AG04449 (cell line): ENCODE measurements at regions of chr12 and their contacts with region 1.

Region 1: DNA sequence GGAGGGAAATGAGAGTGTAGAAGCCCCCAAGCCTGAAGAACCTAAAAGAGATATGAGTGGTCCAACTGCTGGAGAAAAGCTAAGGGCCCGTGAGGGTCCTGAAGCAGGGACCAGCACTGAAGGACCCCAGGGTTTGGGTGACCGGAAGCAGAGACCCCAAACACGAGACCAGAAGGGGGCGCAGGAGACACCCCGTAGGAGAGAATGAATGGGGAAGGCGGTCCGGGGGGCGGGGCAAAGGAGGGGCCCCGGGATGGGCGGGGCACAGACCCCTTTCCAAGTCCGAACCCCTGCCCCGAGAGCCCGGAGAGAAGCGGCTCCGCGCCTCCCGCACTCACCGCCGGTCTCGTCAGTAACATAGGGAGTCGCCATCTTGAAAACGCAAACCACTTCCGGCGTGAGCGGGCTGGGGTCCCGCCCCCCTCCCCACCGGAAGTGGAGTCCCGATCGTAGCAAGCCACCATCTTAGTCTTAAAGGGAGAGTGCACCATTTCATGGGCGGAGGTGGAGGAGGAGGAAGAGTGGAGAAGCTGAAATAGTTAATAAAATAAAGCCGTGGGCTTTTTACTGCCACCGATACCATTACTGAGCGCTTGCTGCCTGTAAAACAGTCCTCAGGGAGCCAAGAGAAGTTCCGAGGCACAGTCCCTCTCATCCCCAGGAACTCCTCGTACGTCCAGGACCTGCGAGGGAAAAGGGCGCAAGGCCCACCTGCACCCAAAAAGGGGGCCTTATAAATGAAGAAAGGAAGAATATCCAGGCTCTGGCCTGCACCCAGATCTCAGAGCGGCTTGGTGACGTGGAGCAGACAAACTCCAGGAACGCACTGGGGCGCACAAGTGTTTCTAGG is 731 bp downstream of the PYM1 start:
- DNase-seq: peak; percentile 60
- H3K4me3 ChIP-seq: peak overlapping the region; percentile 84
- CTCF ChIP-seq: peak; percentile 80

Region 2: DNA sequence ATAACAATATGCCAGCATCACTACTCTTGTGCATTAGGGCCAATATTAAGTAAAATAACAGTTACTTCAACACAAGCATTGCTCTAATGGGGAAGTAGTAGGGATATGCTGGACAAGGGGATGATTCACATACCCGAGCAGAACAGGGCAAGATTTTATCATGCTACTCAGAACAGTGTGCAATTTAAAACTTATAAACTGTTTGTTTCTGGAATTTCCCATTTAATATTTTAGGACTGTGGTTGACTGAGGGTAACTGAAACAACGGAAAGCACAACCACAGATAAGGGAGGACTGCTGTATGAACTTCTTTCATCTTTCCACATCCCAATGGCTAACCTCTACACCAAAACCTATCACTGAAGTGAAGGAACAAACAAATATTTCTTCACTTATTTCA is 146.3 kb before region 1 on chr12:
- CTCF ChIA-PET with region 1: no interaction called
- POLR2A ChIA-PET with region 1: no interaction called
- DNase-seq: peak; percentile 7
- H3K4me3 ChIP-seq: no peak overlapping the region
- CTCF ChIP-seq: no peak

Region 3: GRCh38 chr12:55817346-55818139 is 109.4 kb before region 1 on chr12 and contains the starts of genes ORMDL2 and SARNP:
- CTCF ChIA-PET with region 1: interaction called, 69 read pairs
- POLR2A ChIA-PET with region 1: interaction called, 5 read pairs
- DNase-seq: peak; percentile 99
- H3K4me3 ChIP-seq: peak within 1 kb of the TSS; percentile 92
- CTCF ChIP-seq: no peak

Region 4: GRCh38 chr12:55829967-55830600 is 96.9 kb before region 1 on chr12:
- CTCF ChIA-PET with region 1: interaction called, 16 read pairs
- POLR2A ChIA-PET with region 1: interaction called, 5 read pairs
- DNase-seq: no peak
- H3K4me3 ChIP-seq: peak overlapping the region; percentile 78
- CTCF ChIP-seq: no peak

Region 5: GRCh38 chr12:55847603-55848291 is 79.2 kb before region 1 on chr12:
- CTCF ChIA-PET with region 1: interaction called, 21 read pairs
- POLR2A ChIA-PET with region 1: interaction called, 6 read pairs
- DNase-seq: peak; percentile 98
- H3K4me3 ChIP-seq: peak overlapping the region; percentile 47
- CTCF ChIP-seq: no peak

Region 6: GRCh38 chr12:55915482-55915859 is 11.5 kb before region 1 on chr12:
- CTCF ChIA-PET with region 1: interaction called, 31 read pairs
- POLR2A ChIA-PET with region 1: no interaction called
- DNase-seq: no peak
- H3K4me3 ChIP-seq: no peak overlapping the region
- CTCF ChIP-seq: no peak